PC-3 (cell line): ENCODE measurements at regions of chr1 and their contacts with region 1.

Region 1: GRCh38 chr1:200620273-200621131 is at the start of gene KIF14:
- DNase-seq: peak; percentile 98
- ATAC-seq: peak; percentile 97
- H3K4me3 ChIP-seq: peak within 1 kb of the TSS; percentile 82
- H3K27ac ChIP-seq: peak within 1 kb of the TSS; percentile 74
- H3K4me1 ChIP-seq: peaks cover 9% of the 10 kb centered on the region
- H3K27me3 ChIP-seq: no peaks in the 10 kb centered on the region
- CTCF ChIP-seq: no peak
- total RNA-seq, gene KIF14: 23.6 and 23.7 TPM in 2 replicates

Region 2: GRCh38 chr1:200558866-200559459 is 61.5 kb before region 1 on chr1:
- CTCF ChIA-PET with region 1: interaction called, 21 read pairs
- POLR2A ChIA-PET with region 1: interaction called, 3 read pairs
- intact Hi-C with region 1: loop called (anchors 1 kb)
- DNase-seq: peak; percentile 84
- ATAC-seq: peak; percentile 92
- H3K4me3 ChIP-seq: no peak overlapping the region
- H3K27ac ChIP-seq: no peak overlapping the region
- H3K4me1 ChIP-seq: no peaks in the 10 kb centered on the region
- H3K27me3 ChIP-seq: no peaks in the 10 kb centered on the region
- CTCF ChIP-seq: peak; percentile 99

Region 3: DNA sequence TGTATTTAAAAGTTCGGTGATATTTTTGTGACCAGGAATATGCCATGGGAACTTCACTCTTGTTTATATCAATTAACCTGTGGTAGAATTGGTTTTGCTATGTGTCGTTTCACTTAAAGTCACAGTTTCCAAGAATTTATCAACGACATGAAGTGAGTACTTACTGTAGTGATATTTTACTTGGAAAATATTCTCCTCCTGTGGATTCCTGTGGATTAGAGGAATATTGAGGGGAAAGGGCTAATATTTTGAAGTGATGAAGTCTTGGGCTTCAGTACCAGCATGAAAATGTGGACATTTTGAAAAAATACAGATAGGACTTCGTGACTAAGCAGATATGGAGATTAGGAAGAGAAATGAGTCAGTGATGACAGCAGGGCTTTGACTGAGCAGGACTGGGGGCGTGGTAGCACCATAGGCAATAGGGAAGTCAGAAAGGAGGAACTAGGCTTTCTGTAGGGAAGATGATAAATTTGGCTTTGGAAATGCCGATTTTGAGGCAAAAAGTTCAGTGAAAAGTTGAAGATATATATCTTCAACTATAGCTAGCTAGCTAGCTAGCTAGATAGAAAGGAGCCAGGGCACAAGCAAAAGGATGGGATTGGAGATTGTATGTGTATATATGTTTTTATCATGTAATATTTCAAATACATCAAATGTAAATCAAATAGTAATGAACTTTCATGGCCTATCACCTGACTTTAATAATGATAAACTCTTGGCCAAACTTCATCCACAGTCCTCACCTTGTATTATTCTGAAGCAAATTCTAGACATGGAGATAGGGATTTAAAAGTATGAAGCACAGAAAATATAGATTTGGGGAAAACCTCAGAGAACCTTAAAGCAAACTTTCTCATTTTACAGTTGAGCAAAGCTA is 19.5 kb after region 1 on chr1:
- CTCF ChIA-PET with region 1: interaction called, 3 read pairs
- POLR2A ChIA-PET with region 1: interaction called, 12 read pairs
- intact Hi-C with region 1: no loop called
- DNase-seq: peak; percentile 97
- ATAC-seq: peak; percentile 100
- H3K4me3 ChIP-seq: no peak overlapping the region
- H3K27ac ChIP-seq: peak overlapping the region; percentile 81
- H3K4me1 ChIP-seq: peaks cover 20% of the 10 kb centered on the region
- H3K27me3 ChIP-seq: no peaks in the 10 kb centered on the region
- CTCF ChIP-seq: no peak

Region 4: GRCh38 chr1:200654660-200655059 is 34.2 kb after region 1 on chr1:
- CTCF ChIA-PET with region 1: no interaction called
- POLR2A ChIA-PET with region 1: no interaction called
- intact Hi-C with region 1: no loop called
- DNase-seq: peak; percentile 52
- ATAC-seq: no peak
- H3K4me3 ChIP-seq: no peak overlapping the region
- H3K27ac ChIP-seq: peak overlapping the region; percentile 5; the same call in 1 of the 2 replicates
- H3K4me1 ChIP-seq: peaks cover 27% of the 10 kb centered on the region
- H3K27me3 ChIP-seq: no peaks in the 10 kb centered on the region
- CTCF ChIP-seq: no peak

Region 5: GRCh38 chr1:200738740-200739498 is 118.4 kb after region 1 on chr1 and contains the start of gene CAMSAP2:
- CTCF ChIA-PET with region 1: interaction called, 6 read pairs
- POLR2A ChIA-PET with region 1: interaction called, 5 read pairs
- intact Hi-C with region 1: loop called (anchors 1 kb)
- DNase-seq: peak; percentile 96
- ATAC-seq: peak; percentile 75
- H3K4me3 ChIP-seq: peak within 1 kb of the TSS; percentile 89
- H3K27ac ChIP-seq: peak within 1 kb of the TSS; percentile 90
- H3K4me1 ChIP-seq: peaks cover 39% of the 10 kb centered on the region
- H3K27me3 ChIP-seq: no peaks in the 10 kb centered on the region
- CTCF ChIP-seq: no peak
- total RNA-seq, gene CAMSAP2: 28.6 and 29.5 TPM in 2 replicates

Region 6: DNA sequence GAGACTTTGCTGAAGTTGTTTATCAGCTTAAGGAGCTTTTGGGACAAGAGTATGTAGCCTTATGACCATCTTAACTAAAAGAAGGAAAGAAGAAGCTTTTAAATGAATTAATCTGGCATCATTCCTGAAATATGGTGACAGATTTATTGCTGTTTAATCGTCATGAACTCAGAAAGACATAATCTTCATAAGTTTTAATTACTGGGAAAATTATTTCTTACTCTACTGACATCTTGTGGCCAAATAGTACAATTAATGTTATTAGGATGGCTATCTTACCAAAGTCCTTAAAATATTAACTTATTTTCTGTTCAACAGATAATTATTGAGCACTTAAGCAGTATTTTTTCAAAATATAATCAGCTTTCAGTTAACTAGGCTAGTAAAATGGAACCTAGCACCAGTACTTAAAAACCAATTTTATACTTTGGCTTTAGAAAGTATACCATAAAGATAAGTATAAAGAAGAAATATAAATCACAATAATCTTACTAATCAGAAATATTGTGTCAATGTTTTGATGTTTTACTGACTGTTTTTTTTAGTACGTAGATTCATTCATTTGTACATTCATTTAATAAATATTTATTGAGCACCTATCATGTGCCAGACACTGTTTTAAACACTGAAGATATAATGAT is 217.5 kb after region 1 on chr1:
- CTCF ChIA-PET with region 1: interaction called, 5 read pairs
- POLR2A ChIA-PET with region 1: interaction called, 9 read pairs
- intact Hi-C with region 1: loop called (anchors 1 kb)
- DNase-seq: peak; percentile 82
- ATAC-seq: peak; percentile 55
- H3K4me3 ChIP-seq: no peak overlapping the region
- H3K27ac ChIP-seq: no peak overlapping the region
- H3K4me1 ChIP-seq: no peaks in the 10 kb centered on the region
- H3K27me3 ChIP-seq: no peaks in the 10 kb centered on the region
- CTCF ChIP-seq: peak; percentile 94

Region 7: GRCh38 chr1:200896531-200897196 is 276.2 kb after region 1 on chr1:
- CTCF ChIA-PET with region 1: interaction called, 11 read pairs
- POLR2A ChIA-PET with region 1: interaction called, 4 read pairs
- intact Hi-C with region 1: no loop called
- DNase-seq: peak; percentile 100
- ATAC-seq: peak; percentile 62
- H3K4me3 ChIP-seq: peak overlapping the region; percentile 67
- H3K27ac ChIP-seq: peak overlapping the region; percentile 74
- H3K4me1 ChIP-seq: peaks cover 66% of the 10 kb centered on the region
- H3K27me3 ChIP-seq: no peaks in the 10 kb centered on the region
- CTCF ChIP-seq: no peak

Region 8: GRCh38 chr1:201114236-201115131 is 494.0 kb after region 1 on chr1:
- CTCF ChIA-PET with region 1: interaction called, 14 read pairs
- POLR2A ChIA-PET with region 1: no interaction called
- intact Hi-C with region 1: loop called (anchors 5 kb)
- DNase-seq: peak; percentile 100
- ATAC-seq: peak; percentile 94
- H3K4me3 ChIP-seq: peak overlapping the region; percentile 73
- H3K27ac ChIP-seq: no peak overlapping the region
- H3K4me1 ChIP-seq: peaks cover 13% of the 10 kb centered on the region
- H3K27me3 ChIP-seq: no peaks in the 10 kb centered on the region
- CTCF ChIP-seq: peak; percentile 100